Left ventricle myocardium inferior (tissue), 1 donor: ENCODE measurements at regions of chr5 and their contacts with region 1.

Region 1: DNA sequence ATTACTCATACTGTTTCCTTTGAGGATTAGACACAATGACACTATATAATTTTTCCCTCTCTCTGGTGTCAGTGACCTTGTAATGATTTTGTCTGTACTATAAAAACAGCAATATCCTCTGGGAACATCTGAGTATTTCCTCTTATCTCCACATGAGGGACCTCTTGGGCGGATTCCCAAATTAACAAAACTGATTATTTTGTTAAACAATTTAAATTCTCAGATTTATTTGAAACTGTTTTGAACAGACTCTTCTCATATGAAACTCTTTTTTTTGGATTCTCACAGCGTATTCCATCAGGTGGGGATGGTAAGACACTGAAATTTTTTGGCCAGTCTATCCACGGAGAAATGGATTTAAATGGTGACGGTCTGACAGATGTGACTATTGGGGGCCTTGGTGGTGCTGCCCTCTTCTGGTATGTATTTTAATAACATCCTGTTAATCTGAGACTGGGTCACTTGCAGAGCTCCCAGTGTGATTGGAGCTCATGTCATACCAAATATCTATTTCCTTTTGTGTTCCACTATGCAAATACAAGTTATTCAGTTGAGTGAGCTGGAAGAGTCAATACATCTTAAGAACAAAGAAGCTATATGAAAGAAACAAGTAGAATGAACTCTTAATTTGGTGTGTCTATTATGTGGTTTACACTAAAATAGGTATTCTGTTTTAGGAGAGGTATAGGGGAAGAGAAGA is 73.8 kb upstream of the ITGA2 start:
- DNase-seq: no peak
- H3K4me3 ChIP-seq: peak overlapping the region; percentile 44
- H3K27ac ChIP-seq: peak overlapping the region; percentile 46
- H3K4me1 ChIP-seq: peaks cover 19% of the 10 kb centered on the region
- H3K27me3 ChIP-seq: no peaks in the 10 kb centered on the region
- CTCF ChIP-seq: peak; percentile 84

Region 2: GRCh38 chr5:52665559-52665958 is 249.8 kb before region 1 on chr5:
- intact Hi-C with region 1: loop called (anchors 10 kb)
- DNase-seq: no peak
- H3K4me3 ChIP-seq: peak overlapping the region; percentile 44
- H3K27ac ChIP-seq: peak overlapping the region; percentile 73
- H3K4me1 ChIP-seq: peaks cover 12% of the 10 kb centered on the region
- H3K27me3 ChIP-seq: no peaks in the 10 kb centered on the region
- CTCF ChIP-seq: no peak

Region 3: DNA sequence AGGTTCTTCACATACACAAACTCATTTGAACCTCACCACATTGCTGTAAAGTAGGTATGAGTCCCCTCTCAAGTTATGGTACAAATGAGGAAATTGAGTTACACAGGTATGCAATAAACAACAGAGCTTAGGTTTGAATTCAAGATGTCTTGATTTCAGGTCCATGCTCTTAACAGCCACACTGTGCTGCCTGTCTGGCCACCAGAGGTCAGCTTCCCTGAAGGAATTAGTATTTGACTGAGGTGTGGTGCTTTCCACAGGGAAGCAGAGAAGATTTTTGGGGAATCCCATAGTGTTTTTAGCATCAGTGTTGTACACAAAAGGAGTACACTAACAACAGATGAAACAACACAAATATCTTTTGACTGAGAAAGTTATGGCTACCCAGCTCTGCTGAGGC is 222.0 kb before region 1 on chr5:
- intact Hi-C with region 1: loop called (anchors 10 kb)
- DNase-seq: peak; percentile 23
- H3K4me3 ChIP-seq: no peak overlapping the region
- H3K27ac ChIP-seq: peak overlapping the region; percentile 54
- H3K4me1 ChIP-seq: peaks cover 53% of the 10 kb centered on the region
- H3K27me3 ChIP-seq: no peaks in the 10 kb centered on the region
- CTCF ChIP-seq: peak; percentile 78

Region 4: GRCh38 chr5:52787600-52788504 is 127.5 kb before region 1 on chr5 and contains the starts of genes ITGA1 and PELO:
- intact Hi-C with region 1: loop called (anchors 5 kb)
- DNase-seq: peak; percentile 67
- H3K4me3 ChIP-seq: peak within 1 kb of the TSS; percentile 75
- H3K27ac ChIP-seq: peak within 1 kb of the TSS; percentile 91
- H3K4me1 ChIP-seq: peaks cover 51% of the 10 kb centered on the region
- H3K27me3 ChIP-seq: no peaks in the 10 kb centered on the region
- CTCF ChIP-seq: peak; percentile 63
- total RNA-seq, gene ITGA1: 28.4 TPM
- total RNA-seq, gene PELO: 19.7 TPM